CD14-positive monocyte (primary cell): ENCODE measurements at regions of chr16 and their contacts with region 1.

Region 1: DNA sequence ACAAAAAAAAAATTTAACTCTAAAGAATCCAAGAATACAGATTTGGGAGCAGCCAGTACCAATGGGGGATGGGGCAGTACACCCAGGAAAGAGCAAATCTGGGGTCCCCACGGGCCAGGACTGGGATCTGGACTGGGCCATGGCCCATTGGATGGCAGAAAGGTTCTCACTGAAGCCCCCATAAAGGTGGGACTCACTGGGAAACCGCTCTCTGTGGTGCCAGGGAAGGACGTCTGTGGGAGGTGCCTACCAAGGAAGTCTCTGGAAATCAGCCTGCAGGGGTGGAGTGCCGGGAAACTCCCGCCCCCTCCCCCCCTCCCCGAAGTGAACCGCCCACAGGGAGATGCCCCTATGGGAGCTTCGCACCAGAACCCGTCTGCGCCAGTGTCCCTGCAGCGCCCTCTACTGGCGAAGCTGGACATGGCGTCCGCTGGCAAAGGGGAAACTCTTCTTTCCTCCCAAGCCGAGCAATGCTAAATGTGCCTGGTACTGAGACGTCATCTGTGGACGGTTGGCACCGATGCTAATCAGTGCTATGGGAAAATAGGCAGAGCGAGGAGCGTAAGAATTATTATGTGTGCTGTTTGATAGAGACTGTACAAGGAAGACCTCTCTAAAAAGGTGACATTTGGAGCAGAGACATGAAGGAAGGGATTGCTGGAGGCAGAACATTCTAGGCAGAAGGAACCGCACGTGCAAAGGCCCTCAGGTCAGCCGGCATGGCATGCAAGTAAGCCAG is 671.1 kb downstream of the WWOX start:
- DNase-seq: peak; percentile 46 to 74 (median 48)
- H3K4me3 ChIP-seq: no peak overlapping the region
- H3K4me3 Mint-ChIP-seq: no peak overlapping the region
- H3K27ac ChIP-seq: no peak overlapping the region
- H3K27ac Mint-ChIP-seq: no peak overlapping the region
- H3K4me1 ChIP-seq: no peaks in the 10 kb centered on the region
- H3K4me1 Mint-ChIP-seq: peaks cover 3% of the 10 kb centered on the region
- H3K27me3 ChIP-seq: no peaks in the 10 kb centered on the region
- H3K27me3 Mint-ChIP-seq: peaks cover 0 to 1% (median 1%) of the 10 kb centered on the region in 3 donors
- CTCF ChIP-seq: peak; percentile 93

Region 2: DNA sequence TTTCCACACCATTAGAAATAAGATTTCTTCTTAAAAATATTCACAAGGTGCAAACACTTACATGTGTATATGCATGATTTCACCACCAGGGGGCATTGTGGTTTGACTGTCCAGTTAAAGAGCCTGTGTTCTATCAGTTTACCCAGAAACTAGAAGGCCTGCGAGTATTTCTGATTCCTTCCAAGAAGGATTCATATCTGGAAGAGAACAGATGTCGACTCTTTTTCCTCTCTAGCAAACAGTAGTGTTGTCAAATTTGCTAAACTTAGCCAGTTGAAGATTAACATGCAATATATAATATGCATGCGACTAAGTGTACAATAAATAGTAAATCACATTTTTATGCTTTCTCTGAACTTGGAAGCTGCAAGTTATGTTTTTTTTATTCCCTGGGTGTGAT is 266.9 kb before region 1 on chr16:
- intact Hi-C with region 1: loop called in 1 of 2 experiments (anchors 10 kb)
- DNase-seq: peak; percentile 23 to 55 (median 44)
- H3K4me3 ChIP-seq: no peak overlapping the region
- H3K4me3 Mint-ChIP-seq: no peak overlapping the region
- H3K27ac ChIP-seq: no peak overlapping the region
- H3K27ac Mint-ChIP-seq: no peak overlapping the region
- H3K4me1 ChIP-seq: no peaks in the 10 kb centered on the region
- H3K4me1 Mint-ChIP-seq: peaks cover 3% of the 10 kb centered on the region
- H3K27me3 ChIP-seq: no peaks in the 10 kb centered on the region
- H3K27me3 Mint-ChIP-seq: peaks cover 0 to 4% (median 0%) of the 10 kb centered on the region in 3 donors
- CTCF ChIP-seq: peak; percentile 90

Region 3: DNA sequence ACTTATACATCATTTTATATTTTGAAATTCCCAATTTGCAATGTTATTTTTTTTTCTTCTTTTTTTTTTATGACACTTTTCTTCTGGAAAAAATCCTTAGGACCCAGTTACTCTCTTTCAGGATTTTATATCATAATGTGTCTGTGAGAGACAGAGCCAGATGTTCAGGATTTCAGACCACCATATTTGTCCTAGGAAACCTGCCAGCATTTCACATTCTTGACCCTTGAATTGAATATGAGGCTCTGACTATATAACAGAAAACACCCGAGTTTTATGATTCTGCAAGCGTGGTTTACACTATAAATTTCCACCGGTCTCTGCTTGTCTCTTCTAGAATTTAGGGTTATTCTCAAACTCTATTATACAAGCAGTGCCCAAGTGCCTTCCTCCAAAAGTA is 50.1 kb before region 1 on chr16:
- intact Hi-C with region 1: no loop called
- DNase-seq: no peak
- H3K4me3 ChIP-seq: no peak overlapping the region
- H3K4me3 Mint-ChIP-seq: no peak overlapping the region
- H3K27ac ChIP-seq: no peak overlapping the region
- H3K27ac Mint-ChIP-seq: no peak overlapping the region
- H3K4me1 ChIP-seq: no peaks in the 10 kb centered on the region
- H3K4me1 Mint-ChIP-seq: no peaks in the 10 kb centered on the region
- H3K27me3 ChIP-seq: no peaks in the 10 kb centered on the region
- H3K27me3 Mint-ChIP-seq: peaks cover 0 to 3% (median 0%) of the 10 kb centered on the region in 3 donors
- CTCF ChIP-seq: no peak